ENCODE measurements at regions of chr18 and their contacts with region 1.

Region 1: DNA sequence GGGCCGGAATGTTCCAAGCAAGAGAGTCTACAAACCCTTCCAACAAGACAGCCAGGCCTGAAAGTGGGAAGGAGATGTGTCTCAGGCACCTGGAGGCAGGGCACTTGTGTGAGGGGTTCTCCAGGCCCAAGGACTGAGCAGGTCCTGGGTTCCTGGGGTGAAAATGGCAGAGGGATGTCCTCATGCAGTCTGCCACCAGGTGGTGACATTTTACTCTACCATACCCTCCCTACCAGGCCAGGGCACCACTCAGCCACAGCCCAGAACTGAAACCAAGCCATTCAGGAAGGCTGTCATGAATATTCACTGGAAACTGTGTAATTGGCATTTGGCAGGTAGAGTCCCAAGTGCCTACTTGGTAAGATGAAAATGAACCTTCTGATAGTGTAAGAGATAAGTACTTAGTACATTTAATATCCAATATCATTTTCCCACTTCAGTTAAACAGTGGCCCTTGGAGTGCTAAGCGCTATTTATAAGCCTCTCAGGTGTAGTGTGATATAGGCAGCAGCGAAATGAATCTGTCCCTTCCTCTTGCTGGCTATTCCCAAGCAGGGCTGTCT is 185.1 kb downstream of the MYO5B start:
- DNase-seq: peak in 1 of 2 donors; percentile 17
- ATAC-seq: peak in 1 of 2 donors; percentile 45
- H3K4me3 ChIP-seq: no peak overlapping the region
- H3K27ac ChIP-seq: no peak overlapping the region
- H3K4me1 ChIP-seq: peaks cover 4 to 22% of the 10 kb centered on the region in 2 donors
- H3K27me3 ChIP-seq: no peaks in the 10 kb centered on the region
- CTCF ChIP-seq: peak; percentile 22 to 55 (median 51)
- POLR2A ChIP-seq: no peak

Region 2: DNA sequence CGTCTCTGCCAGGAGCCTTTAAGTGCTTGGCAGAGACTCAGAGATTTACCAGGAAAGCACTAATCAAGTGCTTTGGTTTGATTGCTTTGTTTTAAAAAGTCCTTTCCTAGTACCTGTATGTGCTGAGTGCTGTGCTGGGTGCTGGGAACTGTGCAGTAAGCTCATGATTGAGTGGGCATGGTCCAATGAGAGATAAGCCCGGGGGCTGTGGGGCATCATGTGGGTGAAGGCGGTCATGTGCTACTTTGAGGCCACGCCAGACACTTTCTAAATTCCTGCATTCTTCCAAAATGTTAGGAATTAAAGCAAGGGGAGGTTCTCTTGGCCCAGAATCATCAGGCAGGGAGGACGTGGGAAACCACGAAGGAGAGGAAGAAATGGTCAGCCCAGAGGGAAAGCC is 305.5 kb before region 1 on chr18:
- in situ Hi-C with region 1: no loop called
- intact Hi-C with region 1: no loop called
- DNase-seq: no peak
- ATAC-seq: no peak
- H3K4me3 ChIP-seq: no peak overlapping the region
- H3K27ac ChIP-seq: no peak overlapping the region
- H3K4me1 ChIP-seq: no peaks in the 10 kb centered on the region
- H3K27me3 ChIP-seq: no peaks in the 10 kb centered on the region
- CTCF ChIP-seq: no peak
- POLR2A ChIP-seq: no peak

Region 3: DNA sequence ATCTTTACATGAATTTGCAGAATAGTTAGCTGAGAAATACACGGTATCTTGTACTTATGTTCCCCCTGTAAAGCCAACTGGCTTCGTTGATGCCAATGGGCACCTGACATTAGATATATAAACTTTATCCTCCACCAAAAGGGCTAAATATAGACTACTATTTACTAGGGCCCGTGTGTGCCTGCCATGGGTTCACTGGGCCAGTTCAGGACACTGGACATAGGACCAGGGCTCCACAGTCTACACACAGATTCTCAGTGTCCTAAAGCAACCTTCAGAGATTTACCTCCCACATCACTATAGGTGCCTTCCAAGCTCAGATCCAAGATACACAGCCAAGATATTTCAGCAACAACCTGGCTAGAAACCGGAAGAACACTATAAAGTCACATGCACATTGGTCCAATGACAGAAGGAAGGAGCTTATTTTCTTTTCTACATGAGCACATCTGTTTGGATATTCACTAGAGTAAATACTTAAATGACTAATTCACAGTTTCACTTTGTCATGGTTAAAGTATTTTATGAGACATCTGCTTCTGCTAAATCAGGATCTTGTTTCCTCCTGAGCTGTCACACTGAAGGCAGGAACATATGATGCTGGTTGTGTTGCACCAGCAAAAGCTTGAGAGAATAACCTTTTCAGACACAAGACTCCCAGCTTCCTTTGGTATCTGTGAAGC is 90.0 kb after region 1 on chr18:
- in situ Hi-C with region 1: no loop called
- intact Hi-C with region 1: loop called (anchors 5 kb)
- DNase-seq: peak; percentile 40 to 45
- ATAC-seq: peak; percentile 80 to 85
- H3K4me3 ChIP-seq: no peak overlapping the region
- H3K27ac ChIP-seq: peak overlapping the region; percentile 40 to 71 (median 67)
- H3K4me1 ChIP-seq: peaks cover 13 to 30% of the 10 kb centered on the region in 2 donors
- H3K27me3 ChIP-seq: no peaks in the 10 kb centered on the region
- CTCF ChIP-seq: no peak
- POLR2A ChIP-seq: no peak

Region 4: GRCh38 chr18:50194631-50195532 is 185.0 kb after region 1 on chr18 and contains the start of gene MYO5B:
- in situ Hi-C with region 1: loop called in 2 of 4 experiments (anchors 10 to 25 kb)
- intact Hi-C with region 1: loop called (anchors 1 kb)
- DNase-seq: no peak
- ATAC-seq: peak; percentile 78 to 81
- H3K4me3 ChIP-seq: peak within 1 kb of the TSS; percentile 44 to 61 (median 50)
- H3K27ac ChIP-seq: no peak within 1 kb of the TSS
- H3K4me1 ChIP-seq: peaks cover 0 to 6% of the 10 kb centered on the region in 2 donors
- H3K27me3 ChIP-seq: peaks cover 53 to 64% (median 63%) of the 10 kb centered on the region in 3 donors
- CTCF ChIP-seq: peak in 4 of 5 experiments; percentile 46 to 72 (median 64)
- POLR2A ChIP-seq: no peak
- total RNA-seq, gene MYO5B: 0.05 to 0.60 (median 0.35) TPM

Region 5: DNA sequence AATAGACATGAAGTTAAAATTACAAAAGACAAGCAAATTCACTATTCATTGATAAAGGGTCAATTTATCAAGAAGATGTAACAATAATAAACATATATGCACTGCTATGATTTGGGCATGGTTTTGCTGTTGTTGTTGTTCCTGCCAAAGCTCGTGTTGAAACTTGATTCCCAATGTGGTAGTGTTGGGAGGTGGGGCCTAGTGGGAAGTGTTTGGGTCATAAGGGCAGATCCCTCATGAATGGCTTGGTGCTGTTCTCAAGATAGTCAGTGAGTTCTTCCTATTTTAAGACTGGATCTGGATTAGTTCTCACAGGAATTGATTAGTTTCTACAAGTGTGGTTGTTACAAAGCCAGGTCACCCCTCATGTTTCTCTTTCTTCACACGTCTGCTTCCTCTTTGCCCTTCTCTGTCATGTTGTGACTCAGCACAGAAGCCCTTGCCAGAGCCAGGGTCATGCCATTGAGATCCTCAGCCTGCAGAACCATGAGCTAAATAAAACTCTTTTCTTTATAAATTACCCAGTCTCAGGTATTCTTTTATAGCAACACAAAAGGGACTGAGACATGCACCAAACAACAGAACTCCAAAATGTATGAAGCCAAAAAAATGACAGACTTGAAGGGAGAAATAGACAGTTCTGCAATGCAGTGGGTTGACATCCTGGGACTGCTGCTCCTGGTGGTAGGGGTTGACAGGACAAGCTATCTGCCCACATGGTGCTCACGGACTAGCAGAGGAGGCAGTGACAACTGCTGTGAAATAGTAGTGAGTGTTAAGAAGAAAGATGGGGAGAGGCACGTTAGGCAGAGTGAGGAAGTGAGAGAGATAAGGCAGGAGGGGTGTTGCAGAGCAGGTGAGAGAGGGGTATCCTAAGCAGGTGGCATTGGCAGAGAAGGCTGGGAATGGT is 346.4 kb after region 1 on chr18:
- in situ Hi-C with region 1: no loop called
- intact Hi-C with region 1: loop called (anchors 5 kb)
- DNase-seq: no peak
- ATAC-seq: no peak
- H3K4me3 ChIP-seq: no peak overlapping the region
- H3K27ac ChIP-seq: no peak overlapping the region
- H3K4me1 ChIP-seq: peaks cover 0 to 4% of the 10 kb centered on the region in 2 donors
- H3K27me3 ChIP-seq: no peaks in the 10 kb centered on the region
- CTCF ChIP-seq: no peak
- POLR2A ChIP-seq: no peak

Measured in gastrocnemius medialis (tissue), 4 donors.